ENCODE measurements at regions of chr17 and their contacts with region 1.

Region 1: GRCh38 chr17:33520426-33521330 is 227.6 kb upstream of the ASIC2 start:
- DNase-seq: peak; percentile 71
- ATAC-seq: peak; percentile 62
- H3K4me3 Mint-ChIP-seq: no peak overlapping the region
- H3K27ac Mint-ChIP-seq: no peak overlapping the region
- H3K4me1 Mint-ChIP-seq: no peaks in the 10 kb centered on the region
- H3K27me3 Mint-ChIP-seq: no peaks in the 10 kb centered on the region
- CTCF ChIP-seq: peak; percentile 85

Region 2: GRCh38 chr17:33389504-33390135 is 131.1 kb before region 1 on chr17:
- CTCF ChIA-PET with region 1: no interaction called
- POLR2A ChIA-PET with region 1: no interaction called
- intact Hi-C with region 1: no loop called
- DNase-seq: no peak
- ATAC-seq: no peak
- H3K4me3 Mint-ChIP-seq: no peak overlapping the region
- H3K27ac Mint-ChIP-seq: no peak overlapping the region
- H3K4me1 Mint-ChIP-seq: no peaks in the 10 kb centered on the region
- H3K27me3 Mint-ChIP-seq: peaks cover 20% of the 10 kb centered on the region
- CTCF ChIP-seq: no peak

Region 3: DNA sequence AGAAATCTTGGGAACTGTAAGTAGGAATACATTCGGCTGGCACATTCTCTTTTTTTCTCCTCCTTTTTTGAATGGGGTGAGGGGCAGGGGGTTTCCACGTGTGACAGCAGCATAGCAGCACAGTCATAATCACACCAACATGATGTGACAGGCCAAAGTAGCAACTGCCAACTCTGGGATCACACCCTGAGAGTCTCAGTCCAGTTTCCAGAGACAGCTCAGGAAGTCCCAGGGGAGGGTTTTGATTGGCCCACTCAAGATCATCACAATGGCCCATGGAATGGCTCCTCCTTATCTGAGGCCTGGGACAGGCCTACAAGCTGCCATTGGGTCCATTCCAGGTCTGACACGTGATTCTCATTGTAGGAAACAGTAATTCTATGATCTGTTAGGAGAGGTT is 20.5 kb before region 1 on chr17:
- CTCF ChIA-PET with region 1: no interaction called
- POLR2A ChIA-PET with region 1: no interaction called
- intact Hi-C with region 1: no loop called
- DNase-seq: no peak
- ATAC-seq: no peak
- H3K4me3 Mint-ChIP-seq: no peak overlapping the region
- H3K27ac Mint-ChIP-seq: no peak overlapping the region
- H3K4me1 Mint-ChIP-seq: no peaks in the 10 kb centered on the region
- H3K27me3 Mint-ChIP-seq: peaks cover 1% of the 10 kb centered on the region
- CTCF ChIP-seq: no peak

Region 4: GRCh38 chr17:33674685-33675084 is 154.0 kb after region 1 on chr17:
- CTCF ChIA-PET with region 1: interaction called, 10 read pairs
- POLR2A ChIA-PET with region 1: no interaction called
- intact Hi-C with region 1: loop called (anchors 5 kb)
- DNase-seq: peak; percentile 67
- ATAC-seq: peak; percentile 78
- H3K4me3 Mint-ChIP-seq: no peak overlapping the region
- H3K27ac Mint-ChIP-seq: no peak overlapping the region
- H3K4me1 Mint-ChIP-seq: no peaks in the 10 kb centered on the region
- H3K27me3 Mint-ChIP-seq: peaks cover 4% of the 10 kb centered on the region
- CTCF ChIP-seq: peak; percentile 79

Region 5: DNA sequence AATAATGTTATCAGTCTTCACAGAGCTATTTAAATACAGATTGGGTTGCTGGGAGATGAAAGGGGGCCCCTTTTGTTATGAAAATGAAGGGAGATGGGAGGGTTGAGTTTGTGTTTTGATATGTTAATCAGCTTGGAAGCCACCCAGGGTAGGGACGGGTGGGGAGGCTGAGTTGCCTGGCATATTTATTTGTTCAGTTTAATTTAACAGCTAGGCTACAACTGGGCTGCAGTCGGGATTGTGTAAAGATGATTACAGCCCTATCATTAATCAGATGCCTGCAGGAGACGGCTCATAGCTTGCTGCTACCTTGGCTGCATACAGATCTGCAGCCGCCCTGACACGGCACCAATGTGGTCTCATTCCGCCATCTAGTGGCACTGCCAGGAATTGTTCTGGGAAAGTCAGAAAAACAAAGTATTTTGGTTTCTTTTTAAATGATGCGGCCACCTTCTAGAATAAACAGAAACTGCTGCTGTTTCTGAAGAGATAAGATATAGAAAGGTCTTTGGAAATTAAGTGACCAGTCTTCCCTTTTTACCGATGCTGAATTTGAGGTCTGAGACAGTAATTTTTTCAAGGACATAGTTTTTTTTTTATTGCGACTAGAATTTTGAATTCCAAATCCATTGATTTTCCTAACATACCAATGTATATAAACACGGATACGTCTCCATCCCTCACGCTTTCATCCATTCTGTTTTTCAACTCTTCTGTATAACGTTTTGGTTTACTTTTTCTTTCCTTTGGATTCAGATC is 230.4 kb after region 1 on chr17:
- CTCF ChIA-PET with region 1: interaction called, 6 read pairs
- POLR2A ChIA-PET with region 1: no interaction called
- intact Hi-C with region 1: loop called (anchors 2 kb)
- DNase-seq: peak; percentile 80
- ATAC-seq: peak; percentile 70
- H3K4me3 Mint-ChIP-seq: no peak overlapping the region
- H3K27ac Mint-ChIP-seq: no peak overlapping the region
- H3K4me1 Mint-ChIP-seq: peaks cover 6% of the 10 kb centered on the region
- H3K27me3 Mint-ChIP-seq: peaks cover 37% of the 10 kb centered on the region
- CTCF ChIP-seq: peak; percentile 85

Measured in activated CD8-positive, alpha-beta T cell treated with anti-CD3 and anti-CD28 coated beads for 36 hours (primary cell).